ENCODE measurements at regions of chr9 and their contacts with region 1.

Region 1: DNA sequence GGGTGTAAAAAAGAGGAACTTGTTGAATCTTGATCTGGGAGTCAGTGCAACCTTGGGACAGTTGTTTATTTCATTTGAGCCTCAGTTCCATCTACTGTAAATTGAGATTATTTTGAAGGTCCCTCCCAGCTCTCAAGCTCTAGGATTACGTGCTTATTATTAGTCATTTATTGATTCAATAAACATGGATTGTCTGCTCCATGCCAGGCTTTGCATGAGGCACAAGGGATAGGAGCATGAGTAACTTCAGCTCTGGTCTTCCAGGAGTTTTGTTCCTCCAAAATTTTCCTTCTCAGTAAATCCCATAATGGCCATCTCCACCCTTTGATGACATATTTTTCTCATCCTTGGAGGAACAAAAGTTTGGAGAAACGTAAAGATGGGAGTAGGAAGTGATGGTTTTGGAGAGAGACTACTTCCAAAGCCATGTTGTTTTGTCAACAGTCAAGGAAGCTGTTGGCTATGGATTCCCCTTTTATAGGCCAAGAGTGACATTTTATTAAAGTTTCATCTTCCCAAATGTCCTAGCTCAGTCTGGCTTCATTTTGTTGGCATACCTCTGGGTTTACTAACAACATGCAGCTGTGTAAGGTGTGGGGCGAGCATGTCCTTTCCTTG is 244.6 kb downstream of the DMRT2 start:
- DNase-seq: peak; percentile 46
- ATAC-seq: peak; percentile 84
- H3K4me3 ChIP-seq: no peak overlapping the region
- H3K27ac ChIP-seq: peak overlapping the region; percentile 28
- H3K4me1 ChIP-seq: peaks cover 19% of the 10 kb centered on the region; the same call in 1 of the 2 replicates
- H3K27me3 ChIP-seq: no peaks in the 10 kb centered on the region
- CTCF ChIP-seq: no peak

Region 2: DNA sequence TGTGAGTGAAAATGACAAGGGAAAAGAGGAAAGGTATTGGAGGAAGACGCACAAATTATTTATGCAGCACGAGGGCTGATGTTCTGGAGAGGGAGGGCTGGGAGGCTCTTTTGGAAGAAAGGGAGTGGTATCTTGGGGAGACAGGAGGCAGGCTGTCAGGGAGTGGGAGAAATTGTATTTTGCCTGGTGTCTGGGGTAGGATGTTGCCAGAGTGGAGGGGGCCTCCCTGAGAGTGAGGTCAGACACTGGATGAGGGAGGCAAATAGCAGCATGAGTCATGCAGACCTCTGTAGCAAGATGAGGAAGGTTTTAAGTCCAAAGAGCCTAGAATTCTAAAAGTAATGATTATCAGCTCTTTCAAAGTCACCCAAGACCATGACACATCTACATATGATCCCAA is 86.6 kb before region 1 on chr9:
- CTCF ChIA-PET with region 1: no interaction called
- POLR2A ChIA-PET with region 1: no interaction called
- intact Hi-C with region 1: loop called (anchors 5 kb)
- DNase-seq: peak; percentile 38
- ATAC-seq: peak; percentile 75
- H3K4me3 ChIP-seq: no peak overlapping the region
- H3K27ac ChIP-seq: peak overlapping the region; percentile 89
- H3K4me1 ChIP-seq: peaks cover 15% of the 10 kb centered on the region
- H3K27me3 ChIP-seq: no peaks in the 10 kb centered on the region
- CTCF ChIP-seq: no peak

Measured in PC-3 (cell line).